WTC11 (cell line): ENCODE measurements at regions of chr15 and their contacts with region 1.

Region 1: DNA sequence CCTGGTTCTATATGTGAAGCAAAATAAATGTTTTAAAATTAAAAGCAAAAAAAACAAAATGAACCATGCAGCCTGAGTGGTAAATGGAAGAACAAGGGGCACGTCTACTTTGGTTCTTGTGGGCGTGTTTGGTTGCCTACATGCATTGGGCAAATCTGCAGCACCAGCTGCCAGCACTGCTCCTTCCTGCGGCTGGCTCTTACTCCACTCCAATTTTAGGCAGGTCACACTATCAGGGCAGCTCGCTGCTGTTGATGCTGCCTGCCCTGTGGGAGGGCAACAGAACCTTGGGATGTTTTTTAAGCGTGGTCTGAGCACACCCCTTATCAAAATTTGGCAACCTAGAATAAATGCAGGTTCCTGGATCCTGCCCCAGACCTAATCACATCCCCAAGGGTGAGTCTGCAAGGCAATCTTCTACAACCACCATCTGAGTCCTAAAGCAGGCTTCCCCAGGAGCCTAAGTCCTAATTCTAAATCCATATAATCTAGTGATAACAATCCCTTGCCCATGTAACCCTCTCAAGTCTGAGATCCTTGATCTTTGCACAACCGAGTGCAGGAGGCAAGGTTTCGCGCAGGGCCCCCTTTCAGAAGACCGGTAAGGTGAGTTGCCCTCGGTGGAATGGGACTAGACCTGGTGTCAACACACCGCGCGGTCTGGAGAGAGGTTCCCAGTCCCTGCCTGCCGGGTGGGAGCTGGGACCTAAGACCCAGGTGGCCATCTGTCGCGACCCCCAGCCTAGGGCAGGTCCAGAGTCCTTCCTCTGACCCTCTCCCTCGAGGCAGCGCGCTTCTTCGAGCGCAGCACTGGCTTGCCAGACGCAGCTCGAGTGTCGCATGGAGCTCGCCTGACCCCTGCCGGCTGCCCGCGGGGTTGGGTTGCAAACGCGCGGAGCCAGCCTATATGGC is 15.9 kb downstream of the IVD start:
- DNase-seq: peak; percentile 89
- ATAC-seq: peak; percentile 88
- H3K4me3 Mint-ChIP-seq: peak overlapping the region; percentile 45
- H3K27ac Mint-ChIP-seq: peak overlapping the region; percentile 22; the same call in 1 of the 2 replicates
- H3K4me1 Mint-ChIP-seq: peaks cover 14% of the 10 kb centered on the region
- H3K27me3 Mint-ChIP-seq: no peaks in the 10 kb centered on the region; the same call in 1 of the 2 replicates
- CTCF ChIP-seq: peak; percentile 70

Region 2: DNA sequence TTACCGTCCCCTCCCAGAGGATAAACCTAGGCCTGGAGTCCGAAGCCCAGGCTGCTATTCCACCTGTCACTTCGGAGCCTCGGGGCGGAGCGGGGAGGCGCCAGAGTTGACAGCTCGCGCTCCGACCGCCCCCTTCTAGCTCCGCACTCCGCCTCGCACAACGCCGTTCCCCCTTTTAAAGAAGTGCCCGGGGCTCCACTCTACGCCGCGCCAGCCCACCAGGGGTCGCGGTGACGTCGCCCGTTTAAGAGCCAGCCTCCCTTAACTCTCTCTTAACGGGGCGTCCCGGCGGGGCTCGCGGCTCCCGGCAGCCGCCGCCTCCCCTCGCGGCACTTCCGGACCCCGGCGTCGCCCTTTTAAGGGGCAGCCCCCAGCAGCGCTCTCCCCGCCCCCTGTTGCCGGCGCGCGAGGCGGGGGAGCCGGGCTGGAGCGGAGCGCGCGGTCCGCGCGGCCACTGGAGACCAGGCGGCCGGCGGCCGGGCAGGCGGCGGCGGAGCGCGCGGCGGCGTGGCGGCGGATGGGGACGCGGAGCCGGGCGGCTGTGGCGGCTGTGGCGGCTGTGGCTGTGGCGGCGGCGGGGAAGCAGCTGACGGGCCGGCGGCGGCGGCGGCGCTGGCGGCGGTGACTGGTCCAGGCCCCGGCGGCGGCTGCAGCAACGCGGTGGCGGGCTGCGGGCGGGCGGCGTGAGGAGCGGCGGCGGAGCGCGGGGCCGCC is 98.1 kb before region 1 on chr15 and contains the start of gene INAFM2:
- CTCF ChIA-PET with region 1: interaction called, 15 read pairs
- POLR2A ChIA-PET with region 1: no interaction called
- DNase-seq: peak; percentile 96
- ATAC-seq: peak; percentile 82
- H3K4me3 Mint-ChIP-seq: peak within 1 kb of the TSS; percentile 68
- H3K27ac Mint-ChIP-seq: no peak within 1 kb of the TSS
- H3K4me1 Mint-ChIP-seq: peaks cover 62% of the 10 kb centered on the region
- H3K27me3 Mint-ChIP-seq: peaks cover 25% of the 10 kb centered on the region
- CTCF ChIP-seq: no peak
- total RNA-seq, gene INAFM2: 28.2 to 34.2 TPM (median 30.3 TPM) in 3 replicates

Region 3: DNA sequence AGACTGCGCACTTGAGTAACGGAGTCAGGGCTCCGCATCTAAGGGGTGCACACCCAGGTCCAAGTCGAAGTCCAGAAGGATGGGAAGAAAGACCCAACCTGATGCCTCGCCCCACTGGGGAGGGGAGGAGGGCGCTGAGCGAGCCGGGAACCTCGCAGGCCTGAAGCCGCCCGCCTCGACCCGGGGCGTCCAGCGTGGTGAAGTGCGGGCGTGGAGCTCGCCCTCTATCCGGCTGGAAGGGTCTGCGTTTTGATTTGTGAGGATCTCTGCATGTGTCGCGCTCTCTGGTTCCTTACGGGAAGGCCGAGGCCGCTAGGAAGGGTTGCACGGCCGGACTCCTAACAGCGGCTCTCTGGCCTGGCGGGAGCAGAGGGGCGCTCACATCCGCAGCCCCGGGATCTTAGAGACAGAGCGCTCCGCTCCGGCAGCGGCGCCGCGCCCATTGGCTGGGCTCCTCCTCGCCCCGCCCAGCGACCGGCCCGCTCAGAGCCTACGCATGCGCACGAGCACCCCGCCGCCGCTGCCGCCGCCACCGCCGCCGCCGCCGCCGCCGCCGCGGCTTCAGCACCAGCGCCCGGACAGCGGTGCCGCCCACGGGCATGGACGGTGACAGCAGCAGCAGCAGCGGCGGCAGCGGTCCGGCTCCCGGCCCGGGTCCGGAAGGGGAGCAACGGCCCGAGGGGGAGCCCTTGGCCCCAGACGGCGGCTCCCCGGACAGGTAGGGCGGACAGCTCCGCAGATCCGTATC is 63.6 kb before region 1 on chr15 and contains the start of gene DISP2:
- CTCF ChIA-PET with region 1: interaction called, 12 read pairs
- POLR2A ChIA-PET with region 1: no interaction called
- DNase-seq: peak; percentile 91
- ATAC-seq: peak; percentile 88
- H3K4me3 Mint-ChIP-seq: peak within 1 kb of the TSS; percentile 78
- H3K27ac Mint-ChIP-seq: no peak within 1 kb of the TSS
- H3K4me1 Mint-ChIP-seq: peaks cover 29% of the 10 kb centered on the region
- H3K27me3 Mint-ChIP-seq: peaks cover 34% of the 10 kb centered on the region
- CTCF ChIP-seq: no peak
- total RNA-seq, gene DISP2: 1.0 to 3.5 TPM (median 1.9 TPM) in 3 replicates

Region 4: GRCh38 chr15:40367686-40368611 is 53.6 kb before region 1 on chr15:
- CTCF ChIA-PET with region 1: interaction called, 47 read pairs
- POLR2A ChIA-PET with region 1: no interaction called
- DNase-seq: peak; percentile 90
- ATAC-seq: peak; percentile 89
- H3K4me3 Mint-ChIP-seq: peak overlapping the region; percentile 52
- H3K27ac Mint-ChIP-seq: no peak overlapping the region
- H3K4me1 Mint-ChIP-seq: peaks cover 21% of the 10 kb centered on the region
- H3K27me3 Mint-ChIP-seq: peaks cover 45% of the 10 kb centered on the region
- CTCF ChIP-seq: peak; percentile 77

Region 5: DNA sequence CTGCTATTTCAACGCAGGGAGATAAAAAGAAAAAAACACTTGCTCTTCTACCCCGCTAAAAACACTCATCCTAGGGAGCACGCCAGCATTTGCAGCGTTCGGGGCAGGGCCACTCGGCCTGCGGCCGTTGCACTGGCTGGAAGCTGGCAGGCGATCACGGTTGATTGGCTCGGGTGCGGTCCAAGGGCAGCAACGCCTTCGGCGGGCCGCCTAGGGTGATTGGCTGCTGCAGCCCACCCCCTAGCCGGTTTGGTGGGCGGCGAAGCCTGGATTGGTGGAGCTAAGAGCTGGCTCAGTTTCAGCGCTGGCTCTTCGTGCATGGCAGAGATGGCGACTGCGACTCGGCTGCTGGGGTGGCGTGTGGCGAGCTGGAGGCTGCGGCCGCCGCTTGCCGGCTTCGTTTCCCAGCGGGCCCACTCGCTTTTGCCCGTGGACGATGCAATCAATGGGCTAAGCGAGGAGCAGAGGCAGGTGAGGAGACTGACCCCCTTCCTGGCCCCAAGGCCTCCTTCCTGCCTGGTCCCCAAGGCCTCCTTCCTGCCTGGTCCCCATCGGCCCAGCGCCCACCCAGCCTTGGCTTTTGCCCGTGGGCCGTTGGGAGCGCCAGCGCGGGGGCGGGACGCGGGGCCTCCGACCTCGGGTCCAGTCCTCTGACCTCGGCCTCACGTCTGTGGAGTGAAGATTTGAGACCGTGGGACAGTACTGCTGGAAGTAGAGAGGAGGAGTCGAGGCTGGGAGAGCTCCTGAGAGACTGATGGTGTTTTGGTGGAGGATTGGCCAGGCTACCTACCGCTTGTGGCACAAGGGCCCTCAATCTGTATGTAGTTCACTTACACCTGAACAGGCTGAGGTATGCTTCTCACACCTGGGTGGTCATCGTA is 15.8 kb before region 1 on chr15 and contains the start of gene IVD:
- CTCF ChIA-PET with region 1: interaction called, 12 read pairs
- POLR2A ChIA-PET with region 1: interaction called, 8 read pairs
- DNase-seq: peak; percentile 95
- ATAC-seq: peak; percentile 100
- H3K4me3 Mint-ChIP-seq: peak within 1 kb of the TSS; percentile 88
- H3K27ac Mint-ChIP-seq: peak within 1 kb of the TSS; percentile 96
- H3K4me1 Mint-ChIP-seq: peaks cover 17% of the 10 kb centered on the region
- H3K27me3 Mint-ChIP-seq: no peaks in the 10 kb centered on the region
- CTCF ChIP-seq: no peak
- total RNA-seq, gene IVD: 82.2 to 96.1 TPM (median 89.3 TPM) in 3 replicates

Region 6: GRCh38 chr15:40440743-40441564 is 19.5 kb after region 1 on chr15 and contains the start of gene BAHD1:
- CTCF ChIA-PET with region 1: interaction called, 12 read pairs
- POLR2A ChIA-PET with region 1: interaction called, 6 read pairs
- DNase-seq: peak; percentile 99
- ATAC-seq: peak; percentile 69
- H3K4me3 Mint-ChIP-seq: peak within 1 kb of the TSS; percentile 90
- H3K27ac Mint-ChIP-seq: peak within 1 kb of the TSS; percentile 78
- H3K4me1 Mint-ChIP-seq: peaks cover 58% of the 10 kb centered on the region
- H3K27me3 Mint-ChIP-seq: no peaks in the 10 kb centered on the region
- CTCF ChIP-seq: no peak
- total RNA-seq, gene BAHD1: 40.7 to 49.1 TPM (median 41.5 TPM) in 3 replicates

Region 7: GRCh38 chr15:41043276-41043951 is 621.9 kb after region 1 on chr15:
- CTCF ChIA-PET with region 1: no interaction called
- POLR2A ChIA-PET with region 1: no interaction called
- DNase-seq: no peak
- ATAC-seq: no peak
- H3K4me3 Mint-ChIP-seq: no peak overlapping the region
- H3K27ac Mint-ChIP-seq: no peak overlapping the region
- H3K4me1 Mint-ChIP-seq: no peaks in the 10 kb centered on the region
- H3K27me3 Mint-ChIP-seq: no peaks in the 10 kb centered on the region
- CTCF ChIP-seq: no peak